ENCODE measurements at regions of chr5 and their contacts with region 1.

Region 1: GRCh38 chr5:113330533-113331208 is 104.1 kb downstream of the TSSK1B start:
- DNase-seq: no peak
- H3K4me3 ChIP-seq: no peak overlapping the region
- H3K27ac ChIP-seq: no peak overlapping the region
- H3K4me1 ChIP-seq: peaks cover 6% of the 10 kb centered on the region
- H3K27me3 ChIP-seq: no peaks in the 10 kb centered on the region
- CTCF ChIP-seq: no peak
- POLR2A ChIP-seq: no peak

Region 2: GRCh38 chr5:112366987-112367386 is 963.7 kb before region 1 on chr5:
- intact Hi-C with region 1: no loop called
- DNase-seq: no peak
- H3K4me3 ChIP-seq: no peak overlapping the region
- H3K27ac ChIP-seq: no peak overlapping the region
- H3K4me1 ChIP-seq: no peaks in the 10 kb centered on the region
- H3K27me3 ChIP-seq: no peaks in the 10 kb centered on the region
- CTCF ChIP-seq: no peak
- POLR2A ChIP-seq: no peak

Region 3: GRCh38 chr5:112635771-112636731 is 694.6 kb before region 1 on chr5:
- intact Hi-C with region 1: no loop called
- DNase-seq: no peak
- H3K4me3 ChIP-seq: no peak overlapping the region
- H3K27ac ChIP-seq: no peak overlapping the region
- H3K4me1 ChIP-seq: peaks cover 21% of the 10 kb centered on the region
- H3K27me3 ChIP-seq: no peaks in the 10 kb centered on the region
- CTCF ChIP-seq: no peak
- POLR2A ChIP-seq: no peak

Region 4: DNA sequence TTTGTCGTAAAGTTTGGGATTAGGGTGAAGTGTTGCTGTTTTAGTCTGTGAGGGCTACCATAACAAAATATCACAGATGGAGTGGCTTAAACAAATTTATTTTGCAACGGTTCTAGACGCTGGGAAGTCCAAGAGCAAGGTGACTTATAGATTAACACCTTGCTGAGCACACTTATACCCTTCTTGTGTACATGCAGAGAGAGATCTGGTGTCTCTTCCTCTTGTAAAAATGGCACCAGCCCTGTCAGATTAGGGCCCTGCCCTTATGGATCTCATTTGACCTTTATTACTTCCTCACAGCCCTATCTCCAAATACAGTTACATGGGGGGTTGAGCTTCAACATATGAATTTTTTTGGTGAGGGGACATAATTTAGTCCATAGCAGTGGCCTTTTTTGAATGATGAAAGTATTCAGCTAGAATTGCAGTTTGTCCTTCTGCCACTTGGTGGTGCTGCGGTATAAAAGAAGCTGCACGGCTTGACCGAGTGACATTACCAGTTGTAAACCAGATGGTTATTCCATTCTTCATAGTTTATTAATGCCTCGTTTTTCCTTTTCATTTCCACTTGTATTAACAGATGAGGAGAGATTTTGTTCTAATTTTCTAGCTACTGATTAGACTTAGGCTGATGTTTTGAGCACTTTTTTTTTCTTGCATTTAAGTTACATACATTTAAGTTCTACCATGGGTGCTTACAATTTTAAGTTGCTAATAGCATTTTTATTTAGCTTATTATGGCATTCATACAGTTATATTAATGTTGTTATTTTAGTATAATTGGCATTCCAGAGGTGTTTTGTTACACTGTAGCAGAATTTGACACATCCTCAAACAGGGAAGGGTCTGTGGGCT is 334.7 kb before region 1 on chr5:
- intact Hi-C with region 1: loop called (anchors 10 kb)
- DNase-seq: no peak
- H3K4me3 ChIP-seq: no peak overlapping the region
- H3K27ac ChIP-seq: no peak overlapping the region
- H3K4me1 ChIP-seq: no peaks in the 10 kb centered on the region
- H3K27me3 ChIP-seq: no peaks in the 10 kb centered on the region
- CTCF ChIP-seq: peak; percentile 77 to 90 (median 84)
- POLR2A ChIP-seq: no peak

Measured in vagina (tissue), 2 donors.